ENCODE measurements at regions of chr1 and their contacts with region 1.

Region 1: GRCh38 chr1:183498342-183498991 is 26.2 kb downstream of the SMG7 start:
- DNase-seq: peak; percentile 14
- ATAC-seq: peak; percentile 86
- H3K4me3 Mint-ChIP-seq: no peak overlapping the region
- H3K27ac Mint-ChIP-seq: peak overlapping the region; percentile 73
- H3K4me1 Mint-ChIP-seq: peaks cover 62% of the 10 kb centered on the region
- H3K27me3 Mint-ChIP-seq: no peaks in the 10 kb centered on the region

Region 2: DNA sequence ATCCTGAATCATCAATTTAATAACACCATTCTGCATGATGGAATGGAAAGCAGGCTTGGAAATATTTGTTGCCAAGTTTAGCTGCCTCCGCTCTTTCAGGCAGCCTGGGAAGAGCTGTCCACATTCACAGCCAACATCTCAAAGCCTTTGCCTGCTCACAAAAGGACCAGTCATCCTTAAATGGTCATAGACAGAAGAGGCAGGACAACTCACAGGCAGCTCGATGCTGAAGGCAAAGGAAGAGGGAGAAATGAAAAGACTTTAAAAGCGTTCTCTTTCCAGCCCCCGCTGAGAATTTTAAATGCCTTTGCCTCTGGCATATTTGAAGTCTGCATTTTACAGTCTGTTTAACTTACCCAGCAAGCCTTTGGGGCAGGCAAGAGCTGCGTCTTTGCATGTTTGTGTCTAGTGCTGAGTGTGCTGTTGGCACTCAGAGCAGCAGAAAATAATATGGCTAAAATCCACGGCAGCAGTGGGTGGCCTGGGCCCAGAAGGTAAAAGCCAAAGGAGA is 149.2 kb before region 1 on chr1:
- CTCF ChIA-PET with region 1: no interaction called
- POLR2A ChIA-PET with region 1: no interaction called
- intact Hi-C with region 1: no loop called
- DNase-seq: no peak
- ATAC-seq: no peak
- H3K4me3 Mint-ChIP-seq: no peak overlapping the region
- H3K27ac Mint-ChIP-seq: no peak overlapping the region
- H3K4me1 Mint-ChIP-seq: no peaks in the 10 kb centered on the region
- H3K27me3 Mint-ChIP-seq: peaks cover 9% of the 10 kb centered on the region

Region 3: GRCh38 chr1:183484254-183484653 is 14.2 kb before region 1 on chr1:
- CTCF ChIA-PET with region 1: interaction called, 3 read pairs
- POLR2A ChIA-PET with region 1: no interaction called
- intact Hi-C with region 1: loop called in 1 of 2 experiments (anchors 1 kb)
- DNase-seq: no peak
- ATAC-seq: no peak
- H3K4me3 Mint-ChIP-seq: no peak overlapping the region
- H3K27ac Mint-ChIP-seq: no peak overlapping the region
- H3K4me1 Mint-ChIP-seq: peaks cover 58% of the 10 kb centered on the region
- H3K27me3 Mint-ChIP-seq: no peaks in the 10 kb centered on the region